ENCODE measurements at regions of chr18 and their contacts with region 1.

Region 1: GRCh38 chr18:43847164-43848091 is 570.1 kb upstream of the SYT4 start:
- DNase-seq: no peak
- CTCF ChIP-seq: no peak

Region 2: GRCh38 chr18:43744960-43745740 is 102.3 kb before region 1 on chr18:
- in situ Hi-C with region 1: loop called (anchors 25 kb)
- DNase-seq: no peak
- CTCF ChIP-seq: no peak

Region 3: GRCh38 chr18:44051026-44051425 is 203.6 kb after region 1 on chr18:
- in situ Hi-C with region 1: no loop called
- DNase-seq: no peak
- CTCF ChIP-seq: no peak

Region 4: GRCh38 chr18:44594799-44595467 is 747.5 kb after region 1 on chr18:
- in situ Hi-C with region 1: no loop called
- DNase-seq: no peak
- CTCF ChIP-seq: no peak